CD4-positive, alpha-beta memory T cell (primary cell): ENCODE measurements at regions of chr14 and their contacts with region 1.

Region 1: DNA sequence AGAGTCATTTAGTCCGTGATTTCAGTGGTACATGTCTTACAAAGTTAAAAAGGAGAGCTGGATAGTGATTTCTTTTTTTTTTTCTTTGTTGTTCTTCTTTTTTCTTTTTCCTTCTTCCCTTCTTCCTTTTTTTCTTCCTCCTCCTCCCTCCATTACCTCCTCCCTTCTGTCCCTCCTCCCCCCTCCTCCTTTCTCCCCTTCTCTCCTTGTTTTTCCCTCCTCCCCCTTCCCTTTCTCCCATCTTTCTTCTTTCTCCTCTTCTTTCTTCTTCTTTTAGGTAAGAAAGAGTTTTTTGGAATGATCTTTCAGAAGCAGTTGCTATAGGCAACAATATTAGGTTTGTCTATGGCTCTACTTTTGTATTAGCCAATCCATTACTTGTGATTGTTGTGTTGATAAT is 368.6 kb downstream of the RAD51B start:
- DNase-seq: no peak
- H3K4me3 ChIP-seq: no peak overlapping the region
- H3K4me3 Mint-ChIP-seq: no peak overlapping the region
- H3K27ac ChIP-seq: no peak overlapping the region
- H3K27ac Mint-ChIP-seq: no peak overlapping the region
- H3K4me1 ChIP-seq: no peaks in the 10 kb centered on the region
- H3K4me1 Mint-ChIP-seq: peaks cover 7 to 18% (median 13%) of the 10 kb centered on the region in 4 donors
- H3K27me3 ChIP-seq: no peaks in the 10 kb centered on the region
- H3K27me3 Mint-ChIP-seq: no peaks in the 10 kb centered on the region

Region 2: DNA sequence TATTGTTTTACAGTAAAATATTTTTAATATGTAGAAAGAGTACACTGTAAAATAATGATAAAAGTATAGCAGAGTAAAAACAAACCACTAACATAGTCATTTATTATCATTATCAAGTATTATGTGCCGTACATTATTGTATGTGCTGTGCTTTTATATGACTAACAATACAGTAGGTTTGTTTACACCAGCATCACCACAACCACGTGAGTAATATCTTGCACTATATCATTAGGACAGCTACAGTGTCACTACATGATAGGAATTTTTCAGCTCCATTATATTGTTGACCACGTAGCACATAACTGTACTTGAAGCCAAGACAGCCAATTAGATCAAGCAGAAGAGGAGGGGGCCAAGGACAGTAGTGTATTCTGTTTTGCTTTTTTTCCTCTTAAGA is 46.8 kb after region 1 on chr14:
- CTCF ChIA-PET with region 1: no interaction called
- POLR2A ChIA-PET with region 1: no interaction called
- intact Hi-C with region 1: loop called (anchors 1 kb)
- DNase-seq: no peak
- H3K4me3 ChIP-seq: no peak overlapping the region
- H3K4me3 Mint-ChIP-seq: no peak overlapping the region
- H3K27ac ChIP-seq: no peak overlapping the region
- H3K27ac Mint-ChIP-seq: no peak overlapping the region
- H3K4me1 ChIP-seq: no peaks in the 10 kb centered on the region
- H3K4me1 Mint-ChIP-seq: peaks cover 0 to 3% (median under 1%) of the 10 kb centered on the region in 4 donors
- H3K27me3 ChIP-seq: no peaks in the 10 kb centered on the region
- H3K27me3 Mint-ChIP-seq: no peaks in the 10 kb centered on the region

Region 3: GRCh38 chr14:68295316-68295816 is 107.2 kb after region 1 on chr14:
- CTCF ChIA-PET with region 1: no interaction called
- POLR2A ChIA-PET with region 1: no interaction called
- intact Hi-C with region 1: no loop called
- DNase-seq: no peak
- H3K4me3 ChIP-seq: no peak overlapping the region
- H3K4me3 Mint-ChIP-seq: peak overlapping the region in 1 of 8 donors; percentile 8
- H3K27ac ChIP-seq: no peak overlapping the region
- H3K27ac Mint-ChIP-seq: peak overlapping the region in 3 of 7 donors; percentile 24 to 63 (median 44)
- H3K4me1 ChIP-seq: peaks cover 45% of the 10 kb centered on the region
- H3K4me1 Mint-ChIP-seq: peaks cover 29 to 48% (median 38%) of the 10 kb centered on the region in 4 donors
- H3K27me3 ChIP-seq: no peaks in the 10 kb centered on the region
- H3K27me3 Mint-ChIP-seq: no peaks in the 10 kb centered on the region